CD4-positive, alpha-beta T cell (primary cell): ENCODE measurements at regions of chr11 and their contacts with region 1.

Region 1: DNA sequence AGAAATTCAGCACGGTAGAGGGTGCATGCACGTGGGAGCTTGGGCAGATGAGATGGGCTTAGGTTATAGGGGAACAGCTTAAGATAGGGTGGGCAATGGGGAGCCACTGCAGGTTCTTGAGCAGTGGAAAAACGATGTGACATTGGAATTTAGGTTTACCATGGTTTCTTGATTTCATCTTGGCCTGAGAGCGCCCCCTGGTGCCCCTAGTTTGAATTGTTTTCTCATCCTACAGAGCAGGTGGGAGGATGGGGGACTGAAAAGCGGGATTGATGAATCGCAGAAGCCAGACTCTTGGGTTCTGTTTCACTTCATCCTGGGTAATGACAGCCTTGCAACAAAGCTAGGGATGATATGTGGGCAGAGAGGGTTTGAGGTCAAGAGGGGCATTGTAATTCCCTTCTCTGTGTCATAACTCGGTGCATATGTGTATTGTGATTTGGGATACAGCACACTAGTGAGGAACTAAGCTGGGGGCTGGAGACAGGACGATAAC is 6.7 kb upstream of the MCAM start:
- DNase-seq: peak; percentile 68 to 89 (median 80)
- ATAC-seq: peak; percentile 33
- H3K4me3 ChIP-seq: no peak overlapping the region
- H3K4me3 Mint-ChIP-seq: peak overlapping the region; percentile 69
- H3K27ac ChIP-seq: no peak overlapping the region
- H3K27ac Mint-ChIP-seq: no peak overlapping the region
- H3K4me1 ChIP-seq: peaks cover 43% of the 10 kb centered on the region
- H3K4me1 Mint-ChIP-seq: peaks cover 27% of the 10 kb centered on the region
- H3K27me3 ChIP-seq: peaks cover 1 to 5% of the 10 kb centered on the region in 2 experiments
- H3K27me3 Mint-ChIP-seq: peaks cover 11% of the 10 kb centered on the region
- CTCF ChIP-seq: peak; percentile 86

Region 2: DNA sequence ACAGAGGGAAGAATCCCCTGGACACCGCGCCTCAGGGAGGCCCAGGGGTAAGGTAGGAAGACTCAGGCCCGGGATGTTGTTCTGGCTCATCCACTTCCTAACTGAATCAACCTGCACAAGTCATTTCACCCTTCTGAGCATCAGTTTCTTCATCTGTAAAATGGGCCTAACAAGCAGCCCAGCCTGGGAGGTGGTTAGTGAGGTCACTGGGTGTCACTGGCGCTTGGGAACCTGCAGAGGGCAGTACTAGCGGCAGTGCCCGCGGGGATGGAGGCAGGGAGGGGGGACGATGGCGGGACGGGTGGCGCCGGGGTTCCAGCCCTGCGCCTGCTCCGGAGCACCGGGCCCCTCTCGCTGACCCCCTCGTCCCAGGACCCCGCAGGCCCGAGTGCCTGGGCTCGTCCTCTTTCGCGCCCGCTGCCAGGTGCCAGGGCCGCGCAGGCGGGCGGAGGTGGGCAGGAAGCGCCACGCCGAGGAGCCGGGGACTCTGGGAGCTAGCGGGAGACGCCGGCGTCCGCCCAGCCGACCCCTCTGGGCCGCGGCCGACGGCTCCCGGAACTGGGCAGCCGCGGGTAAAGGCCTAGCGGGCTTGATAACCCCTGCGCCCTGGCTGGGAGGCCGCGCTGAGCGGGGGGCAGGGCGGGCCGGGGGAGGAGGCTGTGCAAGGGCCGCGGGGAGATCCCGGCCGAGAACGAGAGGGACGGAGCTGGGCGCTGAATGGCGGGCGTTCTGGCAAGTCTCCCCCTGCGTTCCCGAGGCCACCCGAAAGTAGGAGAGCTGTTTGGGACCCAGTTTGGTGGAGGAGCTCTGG is 154.9 kb before region 1 on chr11 and contains the start of gene NLRX1:
- CTCF ChIA-PET with region 1: interaction called, 4 read pairs
- POLR2A ChIA-PET with region 1: interaction called, 7 read pairs
- intact Hi-C with region 1: loop called (anchors 1 kb)
- DNase-seq: peak; percentile 72 to 91 (median 78)
- ATAC-seq: peak; percentile 98
- H3K4me3 ChIP-seq: peak within 1 kb of the TSS; percentile 73
- H3K4me3 Mint-ChIP-seq: peak within 1 kb of the TSS; percentile 91
- H3K27ac ChIP-seq: peak within 1 kb of the TSS; percentile 36 to 56
- H3K27ac Mint-ChIP-seq: peak within 1 kb of the TSS; percentile 82
- H3K4me1 ChIP-seq: peaks cover 15% of the 10 kb centered on the region
- H3K4me1 Mint-ChIP-seq: peaks cover 6% of the 10 kb centered on the region
- H3K27me3 ChIP-seq: no peaks in the 10 kb centered on the region
- H3K27me3 Mint-ChIP-seq: no peaks in the 10 kb centered on the region
- CTCF ChIP-seq: peak; percentile 92
- total RNA-seq, gene NLRX1: 4.2 to 5.4 TPM

Region 3: GRCh38 chr11:119196833-119197483 is 126.6 kb before region 1 on chr11:
- CTCF ChIA-PET with region 1: interaction called, 6 read pairs
- POLR2A ChIA-PET with region 1: no interaction called
- intact Hi-C with region 1: loop called in 1 of 2 experiments (anchors 2 kb)
- DNase-seq: peak; percentile 36 to 90 (median 64)
- ATAC-seq: peak; percentile 99
- H3K4me3 ChIP-seq: no peak overlapping the region
- H3K4me3 Mint-ChIP-seq: no peak overlapping the region
- H3K27ac ChIP-seq: no peak overlapping the region
- H3K27ac Mint-ChIP-seq: no peak overlapping the region
- H3K4me1 ChIP-seq: no peaks in the 10 kb centered on the region
- H3K4me1 Mint-ChIP-seq: peaks cover 5% of the 10 kb centered on the region
- H3K27me3 ChIP-seq: no peaks in the 10 kb centered on the region
- H3K27me3 Mint-ChIP-seq: no peaks in the 10 kb centered on the region
- CTCF ChIP-seq: peak; percentile 85

Region 4: GRCh38 chr11:119284344-119285157 is 39.0 kb before region 1 on chr11:
- CTCF ChIA-PET with region 1: interaction called, 18 read pairs
- POLR2A ChIA-PET with region 1: interaction called, 4 read pairs
- intact Hi-C with region 1: loop called (anchors 5 kb)
- DNase-seq: peak in 4 of 14 experiments; percentile 32 to 77 (median 74)
- ATAC-seq: peak; percentile 97
- H3K4me3 ChIP-seq: no peak overlapping the region
- H3K4me3 Mint-ChIP-seq: no peak overlapping the region
- H3K27ac ChIP-seq: no peak overlapping the region
- H3K27ac Mint-ChIP-seq: peak overlapping the region; percentile 34
- H3K4me1 ChIP-seq: peaks cover 11% of the 10 kb centered on the region
- H3K4me1 Mint-ChIP-seq: peaks cover 40% of the 10 kb centered on the region
- H3K27me3 ChIP-seq: no peaks in the 10 kb centered on the region
- H3K27me3 Mint-ChIP-seq: no peaks in the 10 kb centered on the region
- CTCF ChIP-seq: peak; percentile 80

Region 5: GRCh38 chr11:119306373-119306890 is 17.2 kb before region 1 on chr11:
- CTCF ChIA-PET with region 1: interaction called, 3 read pairs
- POLR2A ChIA-PET with region 1: interaction called, 14 read pairs
- intact Hi-C with region 1: no loop called
- DNase-seq: peak in 11 of 14 experiments; percentile 20 to 77 (median 40)
- ATAC-seq: peak; percentile 95
- H3K4me3 ChIP-seq: no peak overlapping the region
- H3K4me3 Mint-ChIP-seq: peak overlapping the region; percentile 62
- H3K27ac ChIP-seq: peak overlapping the region; percentile 39 to 53
- H3K27ac Mint-ChIP-seq: peak overlapping the region; percentile 96
- H3K4me1 ChIP-seq: peaks cover 26% of the 10 kb centered on the region
- H3K4me1 Mint-ChIP-seq: peaks cover 35% of the 10 kb centered on the region
- H3K27me3 ChIP-seq: no peaks in the 10 kb centered on the region
- H3K27me3 Mint-ChIP-seq: no peaks in the 10 kb centered on the region
- CTCF ChIP-seq: no peak

Region 6: GRCh38 chr11:119338318-119338907 is 14.8 kb after region 1 on chr11:
- CTCF ChIA-PET with region 1: interaction called, 18 read pairs
- POLR2A ChIA-PET with region 1: interaction called, 4 read pairs
- intact Hi-C with region 1: no loop called
- DNase-seq: peak; percentile 50 to 84 (median 60)
- ATAC-seq: peak; percentile 47
- H3K4me3 ChIP-seq: no peak overlapping the region
- H3K4me3 Mint-ChIP-seq: peak overlapping the region; percentile 85
- H3K27ac ChIP-seq: no peak overlapping the region
- H3K27ac Mint-ChIP-seq: peak overlapping the region; percentile 70
- H3K4me1 ChIP-seq: peaks cover 51% of the 10 kb centered on the region
- H3K4me1 Mint-ChIP-seq: peaks cover 36% of the 10 kb centered on the region
- H3K27me3 ChIP-seq: peaks cover 31 to 45% of the 10 kb centered on the region in 2 experiments
- H3K27me3 Mint-ChIP-seq: peaks cover 42% of the 10 kb centered on the region
- CTCF ChIP-seq: peak; percentile 78

Region 7: GRCh38 chr11:119363851-119364590 is 40.4 kb after region 1 on chr11:
- CTCF ChIA-PET with region 1: no interaction called
- POLR2A ChIA-PET with region 1: no interaction called
- intact Hi-C with region 1: no loop called
- DNase-seq: peak in 11 of 14 experiments; percentile 23 to 78 (median 53)
- ATAC-seq: peak; percentile 89
- H3K4me3 ChIP-seq: peak overlapping the region; percentile 16
- H3K4me3 Mint-ChIP-seq: peak overlapping the region; percentile 87
- H3K27ac ChIP-seq: no peak overlapping the region
- H3K27ac Mint-ChIP-seq: no peak overlapping the region
- H3K4me1 ChIP-seq: peaks cover 18% of the 10 kb centered on the region
- H3K4me1 Mint-ChIP-seq: peaks cover 14% of the 10 kb centered on the region
- H3K27me3 ChIP-seq: peaks cover 42 to 63% of the 10 kb centered on the region in 2 experiments
- H3K27me3 Mint-ChIP-seq: peaks cover 65% of the 10 kb centered on the region
- CTCF ChIP-seq: no peak